ENCODE measurements at regions of chr10 and their contacts with region 1.

Region 1: GRCh38 chr10:89213191-89213808 is 6.2 kb upstream of the CH25H start:
- DNase-seq: no peak
- H3K4me3 ChIP-seq: no peak overlapping the region
- H3K27ac ChIP-seq: no peak overlapping the region
- H3K4me1 ChIP-seq: peaks cover 4 to 24% (median 12%) of the 10 kb centered on the region in 4 donors
- H3K27me3 ChIP-seq: peaks cover 0 to 5% (median 0%) of the 10 kb centered on the region in 4 donors
- CTCF ChIP-seq: peak; percentile 58 to 76 (median 63)
- EP300 ChIP-seq: no peak
- POLR2A ChIP-seq: no peak

Region 2: GRCh38 chr10:89029785-89030437 is 183.4 kb before region 1 on chr10:
- intact Hi-C with region 1: loop called (anchors 2 kb)
- DNase-seq: no peak
- H3K4me3 ChIP-seq: no peak overlapping the region
- H3K27ac ChIP-seq: no peak overlapping the region
- H3K4me1 ChIP-seq: peaks cover 12 to 37% (median 33%) of the 10 kb centered on the region in 4 donors
- H3K27me3 ChIP-seq: no peaks in the 10 kb centered on the region
- CTCF ChIP-seq: peak; percentile 89 to 96 (median 93)
- EP300 ChIP-seq: no peak
- POLR2A ChIP-seq: no peak

Region 3: GRCh38 chr10:89274928-89275327 is 61.6 kb after region 1 on chr10:
- intact Hi-C with region 1: no loop called
- DNase-seq: no peak
- H3K4me3 ChIP-seq: no peak overlapping the region
- H3K27ac ChIP-seq: peak overlapping the region; percentile 3 to 68 (median 46)
- H3K4me1 ChIP-seq: peaks cover 34 to 45% (median 40%) of the 10 kb centered on the region in 4 donors
- H3K27me3 ChIP-seq: no peaks in the 10 kb centered on the region
- CTCF ChIP-seq: no peak
- EP300 ChIP-seq: no peak
- POLR2A ChIP-seq: no peak

Region 4: GRCh38 chr10:89426230-89426868 is 213.0 kb after region 1 on chr10:
- intact Hi-C with region 1: no loop called
- DNase-seq: no peak
- H3K4me3 ChIP-seq: no peak overlapping the region
- H3K27ac ChIP-seq: no peak overlapping the region
- H3K4me1 ChIP-seq: peaks cover 4 to 17% (median 10%) of the 10 kb centered on the region in 4 donors
- H3K27me3 ChIP-seq: no peaks in the 10 kb centered on the region
- CTCF ChIP-seq: peak; percentile 85 to 90 (median 86)
- EP300 ChIP-seq: no peak
- POLR2A ChIP-seq: no peak